Heart left ventricle (tissue), 16 donors: ENCODE measurements at regions of chr20 and their contacts with region 1.

Region 1: DNA sequence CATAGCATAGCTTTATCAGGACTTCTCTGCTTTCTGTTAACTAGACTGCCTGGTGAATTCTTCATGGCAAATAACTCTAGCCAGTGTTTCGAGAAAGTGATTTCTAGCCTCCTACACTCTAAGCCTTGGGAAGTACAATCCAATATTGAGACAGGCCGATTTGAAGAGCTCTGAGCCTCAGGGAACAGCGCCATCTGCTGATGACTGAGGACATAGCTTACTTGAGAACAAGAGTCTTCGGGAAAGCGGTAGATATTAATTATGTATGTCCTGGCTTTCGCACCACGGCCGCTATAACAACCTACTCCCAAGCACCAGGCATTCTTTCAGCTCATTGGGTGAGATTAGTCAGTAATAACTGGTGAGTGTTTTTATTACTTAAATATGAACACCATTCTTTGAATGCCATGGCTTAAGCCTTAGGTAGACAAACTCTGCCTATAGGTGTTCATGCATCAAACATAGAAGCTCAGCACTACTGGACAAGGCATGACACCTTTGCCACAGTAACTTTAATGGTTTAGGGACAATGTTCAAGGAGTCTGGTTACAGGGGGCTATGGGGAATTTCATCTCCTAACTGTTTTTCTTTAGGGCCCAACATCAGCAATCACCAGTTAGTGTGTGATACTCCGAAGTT is 518.6 kb downstream of the BMP2 start:
- DNase-seq: peak; percentile 59 to 77 (median 67)
- ATAC-seq: peak; percentile 47 to 93 (median 87)
- H3K4me3 ChIP-seq: no peak overlapping the region
- H3K27ac ChIP-seq: no peak overlapping the region
- H3K4me1 ChIP-seq: no peaks in the 10 kb centered on the region
- H3K27me3 ChIP-seq: no peaks in the 10 kb centered on the region
- CTCF ChIP-seq: peak; percentile 76 to 92 (median 80)
- POLR2A ChIP-seq: no peak

Region 2: DNA sequence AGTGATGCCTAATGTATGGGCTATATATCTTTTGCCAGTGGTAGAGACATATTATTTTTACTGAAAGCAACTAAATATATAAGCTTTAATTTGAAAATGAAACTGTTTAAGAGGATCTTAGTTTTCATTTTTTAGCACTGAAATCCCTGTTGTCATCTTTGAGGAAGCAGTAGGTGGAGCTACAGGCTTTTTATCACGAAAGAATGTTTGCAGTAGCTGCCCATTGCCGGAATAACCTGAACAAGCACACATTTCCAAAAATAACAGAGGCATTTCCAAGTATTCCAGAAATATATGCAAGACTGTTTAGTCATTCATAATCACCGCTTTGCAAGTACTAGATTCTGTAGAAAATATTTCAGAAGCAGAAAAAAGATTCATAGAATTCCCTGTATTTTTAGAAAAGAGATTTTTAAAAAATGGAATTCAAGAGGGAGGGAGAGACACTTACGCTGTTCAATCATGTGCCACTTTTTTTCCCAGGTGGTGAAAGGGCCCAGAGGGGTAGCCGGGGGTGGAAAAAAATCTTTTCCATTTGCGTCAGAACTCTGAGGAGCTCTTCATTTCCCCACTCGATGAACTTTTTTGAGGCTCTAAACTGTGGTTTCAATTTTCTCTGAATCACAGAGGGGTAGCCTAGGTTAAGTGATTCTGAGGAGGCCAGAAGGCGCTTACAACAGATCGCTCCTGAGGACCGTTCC is 1020.7 kb before region 1 on chr20:
- intact Hi-C with region 1: loop called in 1 of 10 experiments (anchors 10 kb)
- DNase-seq: peak in 1 of 5 donors; percentile 22
- ATAC-seq: peak in 3 of 4 donors; percentile 65 to 87 (median 83)
- H3K4me3 ChIP-seq: peak overlapping the region in 5 of 12 donors; percentile 8 to 37 (median 16)
- H3K27ac ChIP-seq: peak overlapping the region in 9 of 12 donors; percentile 3 to 57 (median 17)
- H3K4me1 ChIP-seq: peaks cover 0 to 10% (median 3%) of the 10 kb centered on the region in 12 donors
- H3K27me3 ChIP-seq: no peaks in the 10 kb centered on the region
- CTCF ChIP-seq: peak in 11 of 12 donors; percentile 9 to 65 (median 34)
- POLR2A ChIP-seq: no peak

Region 3: DNA sequence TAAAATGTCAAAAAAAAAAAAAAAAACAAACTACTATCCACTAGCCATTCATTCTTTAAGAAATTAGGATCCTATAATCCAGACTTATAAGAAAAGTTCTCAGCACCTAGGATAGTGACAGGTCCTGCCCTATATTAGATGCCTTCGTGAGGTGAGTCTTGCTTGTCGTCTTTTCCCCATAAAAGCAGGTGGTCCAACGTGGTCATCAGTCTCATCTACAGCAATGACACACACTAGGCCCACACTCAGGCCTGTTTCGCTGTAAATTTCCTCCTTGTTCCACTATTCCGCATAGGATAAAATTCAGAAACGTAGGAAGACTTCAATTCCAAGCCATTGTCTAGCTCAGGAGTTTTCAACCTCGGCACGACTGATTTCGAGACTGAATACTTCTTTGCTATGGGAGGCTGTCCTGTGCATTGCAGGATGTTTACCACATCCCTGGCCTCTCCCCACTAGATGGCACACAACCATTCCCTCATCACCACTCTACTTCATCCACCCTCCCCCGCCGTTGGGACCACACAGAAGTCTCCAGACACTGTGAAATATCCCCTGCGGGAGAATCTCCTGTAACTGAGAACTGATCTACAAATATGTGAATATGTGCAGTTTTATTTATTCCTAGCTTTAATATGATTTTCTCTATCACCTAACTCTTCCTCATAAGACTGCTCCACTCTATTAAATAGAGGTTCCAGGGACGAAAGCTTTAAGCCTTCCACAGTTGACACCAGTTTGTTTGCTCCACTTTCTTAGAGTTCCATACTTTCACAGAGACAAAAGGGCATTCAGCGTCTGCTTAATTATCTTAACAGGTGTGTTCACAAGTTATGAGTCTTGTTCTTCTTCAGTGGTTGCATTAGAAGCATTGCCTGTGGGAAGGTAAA is 172.2 kb before region 1 on chr20:
- intact Hi-C with region 1: loop called in 8 of 10 experiments (anchors 2 to 10 kb)
- DNase-seq: peak; percentile 40 to 65 (median 51)
- ATAC-seq: peak; percentile 83 to 98 (median 94)
- H3K4me3 ChIP-seq: no peak overlapping the region
- H3K27ac ChIP-seq: no peak overlapping the region
- H3K4me1 ChIP-seq: no peaks in the 10 kb centered on the region
- H3K27me3 ChIP-seq: no peaks in the 10 kb centered on the region
- CTCF ChIP-seq: peak; percentile 37 to 68 (median 50)
- POLR2A ChIP-seq: no peak

Region 4: GRCh38 chr20:7323955-7324354 is 37.9 kb after region 1 on chr20:
- intact Hi-C with region 1: no loop called
- DNase-seq: no peak
- ATAC-seq: no peak
- H3K4me3 ChIP-seq: no peak overlapping the region
- H3K27ac ChIP-seq: no peak overlapping the region
- H3K4me1 ChIP-seq: no peaks in the 10 kb centered on the region
- H3K27me3 ChIP-seq: peaks cover 0 to under 1% (median 0%) of the 10 kb centered on the region in 9 donors
- CTCF ChIP-seq: no peak
- POLR2A ChIP-seq: no peak

Region 5: GRCh38 chr20:7859356-7859802 is 573.3 kb after region 1 on chr20:
- intact Hi-C with region 1: loop called in 5 of 10 experiments (anchors 2 to 10 kb)
- DNase-seq: peak in 2 of 5 donors; percentile 22 to 29
- ATAC-seq: peak; percentile 55 to 86 (median 74)
- H3K4me3 ChIP-seq: no peak overlapping the region
- H3K27ac ChIP-seq: no peak overlapping the region
- H3K4me1 ChIP-seq: peaks cover 0 to 7% (median 4%) of the 10 kb centered on the region in 12 donors
- H3K27me3 ChIP-seq: peaks cover 0 to 5% (median 0%) of the 10 kb centered on the region in 9 donors
- CTCF ChIP-seq: peak; percentile 17 to 68 (median 56)
- POLR2A ChIP-seq: no peak